ENCODE measurements at regions of chr2 and their contacts with region 1.

Region 1: DNA sequence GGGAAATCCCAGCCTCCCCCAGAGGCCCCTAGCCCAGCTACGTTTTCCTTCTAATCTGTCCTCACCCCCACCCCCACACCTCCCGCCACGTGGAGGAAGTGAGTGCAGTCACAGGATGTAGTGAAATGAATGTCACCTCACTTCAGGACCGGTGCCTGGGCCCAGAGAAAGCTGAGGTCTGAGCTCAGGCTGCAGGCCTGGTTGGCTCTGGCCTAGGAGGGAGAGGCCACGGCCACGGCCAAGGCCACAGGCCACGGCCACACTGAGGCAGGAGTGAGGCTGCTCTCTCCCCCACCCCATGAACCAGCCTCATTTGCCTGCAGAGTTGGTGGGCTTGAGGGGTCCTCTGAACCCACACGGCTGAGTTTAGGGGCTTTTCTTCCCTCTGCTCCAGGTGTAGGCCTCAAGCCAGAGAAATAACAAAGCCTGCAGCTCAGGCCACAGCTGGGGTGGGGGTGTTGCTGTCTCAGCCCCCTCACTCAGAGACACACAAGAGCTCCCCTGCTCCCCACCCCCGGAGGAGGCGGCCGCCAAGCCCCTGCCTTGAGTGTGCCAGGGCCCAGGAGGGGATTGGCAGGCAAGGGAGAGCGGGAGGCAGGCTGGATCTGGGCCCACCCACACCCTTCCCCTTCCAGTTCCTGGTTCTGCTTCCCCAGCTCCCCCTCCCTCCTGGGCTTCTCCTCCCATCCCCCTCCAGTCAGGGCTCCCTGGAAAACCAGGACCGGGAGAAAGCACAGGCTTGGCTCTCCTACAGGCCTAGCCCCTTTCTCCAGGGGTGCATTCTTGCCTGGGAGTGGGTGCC is 27.0 kb downstream of the DNMT3A start:
- DNase-seq: peak; percentile 62 to 89
- H3K4me3 ChIP-seq: no peak overlapping the region
- H3K27ac ChIP-seq: peak overlapping the region; percentile 77; the same call in 1 of the 2 replicates
- H3K4me1 ChIP-seq: peaks cover 5 to 57% (median 51%) of the 10 kb centered on the region in 4 experiments
- H3K27me3 ChIP-seq: no peaks in the 10 kb centered on the region
- CTCF ChIP-seq: no peak
- EP300 ChIP-seq: peak in 1 of 2 experiments; percentile 80; a peak in 1 of 3 replicates
- POLR2A ChIP-seq: no peak; a peak in 1 of 3 replicates
- RAD21 ChIP-seq: no peak; a peak in 1 of 4 replicates

Region 2: DNA sequence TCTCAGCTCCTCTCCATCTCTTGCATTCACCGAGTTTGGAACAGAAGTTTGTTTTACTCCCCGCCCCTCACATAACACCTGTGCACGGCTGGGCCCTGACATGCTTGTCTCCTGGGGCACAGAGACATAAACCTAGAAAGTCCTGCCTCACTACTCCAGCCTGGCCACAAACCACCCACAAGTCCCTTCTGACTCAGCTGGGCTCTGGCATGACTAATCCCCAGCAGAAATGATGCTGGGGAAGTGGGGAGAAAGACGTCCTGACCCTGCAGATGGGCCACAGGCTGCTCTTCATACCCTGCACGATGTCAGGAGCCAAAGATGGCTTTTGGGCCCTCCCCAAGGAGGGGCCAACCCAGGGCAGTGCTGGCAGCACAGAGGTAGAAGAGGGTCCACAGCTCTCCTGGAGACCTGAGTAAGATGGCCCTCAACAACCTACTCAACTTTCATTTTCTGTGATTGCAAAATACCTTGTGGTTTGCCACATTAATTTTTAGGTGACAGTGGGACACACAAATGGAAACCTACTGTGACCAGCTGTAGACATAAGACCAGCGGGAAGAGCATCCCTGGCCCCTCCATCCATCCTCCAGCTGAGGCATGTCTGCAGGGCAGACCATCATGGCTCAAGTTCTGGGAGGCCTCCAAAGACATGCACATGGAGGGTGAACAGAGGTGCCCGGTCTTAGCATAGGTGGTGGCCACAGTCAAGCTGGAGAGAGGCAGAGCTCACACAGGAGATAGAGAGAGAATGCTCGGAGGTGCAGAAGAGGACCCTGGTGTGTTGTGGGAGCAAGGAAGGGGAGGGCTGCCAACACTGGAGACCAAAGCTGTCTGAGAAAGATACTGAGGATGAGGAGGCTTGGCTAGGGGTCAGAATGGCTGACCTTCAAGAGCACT is 13.0 kb before region 1 on chr2:
- CTCF ChIA-PET with region 1: interaction called, 7 read pairs
- POLR2A ChIA-PET with region 1: interaction called, 10 read pairs
- DNase-seq: no peak
- H3K4me3 ChIP-seq: no peak overlapping the region
- H3K27ac ChIP-seq: no peak overlapping the region
- H3K4me1 ChIP-seq: peaks cover 2 to 13% (median 9%) of the 10 kb centered on the region in 4 experiments; a peak in 5 of 7 replicates
- H3K27me3 ChIP-seq: no peaks in the 10 kb centered on the region
- CTCF ChIP-seq: no peak
- EP300 ChIP-seq: no peak
- POLR2A ChIP-seq: no peak
- RAD21 ChIP-seq: no peak

Region 3: GRCh38 chr2:25332571-25332970 is 17.9 kb after region 1 on chr2:
- CTCF ChIA-PET with region 1: interaction called, 178 read pairs
- POLR2A ChIA-PET with region 1: interaction called, 10 read pairs
- DNase-seq: no peak
- H3K4me3 ChIP-seq: no peak overlapping the region
- H3K27ac ChIP-seq: no peak overlapping the region
- H3K4me1 ChIP-seq: peaks cover 18 to 39% (median 27%) of the 10 kb centered on the region in 4 experiments
- H3K27me3 ChIP-seq: peaks cover 0 to 3% (median 0%) of the 10 kb centered on the region in 4 experiments; a peak in 2 of 7 replicates
- CTCF ChIP-seq: no peak
- EP300 ChIP-seq: no peak
- POLR2A ChIP-seq: no peak
- RAD21 ChIP-seq: no peak

Region 4: GRCh38 chr2:25342372-25343186 is 27.9 kb after region 1 on chr2:
- CTCF ChIA-PET with region 1: interaction called, 178 read pairs
- POLR2A ChIA-PET with region 1: interaction called, 9 read pairs
- DNase-seq: peak; percentile 77 to 93
- H3K4me3 ChIP-seq: peak overlapping the region; percentile 37 to 64 (median 48); a peak in 7 of 8 replicates
- H3K27ac ChIP-seq: no peak overlapping the region
- H3K4me1 ChIP-seq: peaks cover 0 to 20% (median 10%) of the 10 kb centered on the region in 4 experiments; a peak in 5 of 7 replicates
- H3K27me3 ChIP-seq: peaks cover 0 to 18% (median 11%) of the 10 kb centered on the region in 4 experiments; a peak in 6 of 7 replicates
- CTCF ChIP-seq: peak in 2 of 3 experiments; percentile 95 to 96; a peak in 3 of 4 replicates
- EP300 ChIP-seq: peak in 1 of 2 experiments; percentile 15; a peak in 2 of 3 replicates
- POLR2A ChIP-seq: no peak
- RAD21 ChIP-seq: peak; percentile 80 to 86

Region 5: GRCh38 chr2:25362049-25362433 is 47.3 kb after region 1 on chr2:
- CTCF ChIA-PET with region 1: interaction called, 18 read pairs
- POLR2A ChIA-PET with region 1: interaction called, 10 read pairs
- DNase-seq: peak; percentile 88 to 100
- H3K4me3 ChIP-seq: peak overlapping the region in 1 of 4 experiments; percentile 44; a peak in 3 of 8 replicates
- H3K27ac ChIP-seq: no peak overlapping the region
- H3K4me1 ChIP-seq: peaks cover 0 to 9% (median 5%) of the 10 kb centered on the region in 4 experiments; a peak in 6 of 7 replicates
- H3K27me3 ChIP-seq: peaks cover 0 to 31% (median 22%) of the 10 kb centered on the region in 4 experiments; a peak in 6 of 7 replicates
- CTCF ChIP-seq: peak; percentile 85 to 96 (median 90)
- EP300 ChIP-seq: no peak
- POLR2A ChIP-seq: no peak
- RAD21 ChIP-seq: peak; percentile 43 to 54